ENCODE measurements at regions of chr9 and their contacts with region 1.

Region 1: GRCh38 chr9:35603987-35604577 is 980 bp upstream of the TESK1 start:
- DNase-seq: peak; percentile 95
- ATAC-seq: peak; percentile 90
- H3K4me3 Mint-ChIP-seq: peak overlapping the region; percentile 97
- H3K27ac Mint-ChIP-seq: peak overlapping the region; percentile 97
- H3K4me1 Mint-ChIP-seq: peaks cover 37% of the 10 kb centered on the region
- H3K27me3 Mint-ChIP-seq: no peaks in the 10 kb centered on the region
- CTCF ChIP-seq: peak; percentile 76

Region 2: DNA sequence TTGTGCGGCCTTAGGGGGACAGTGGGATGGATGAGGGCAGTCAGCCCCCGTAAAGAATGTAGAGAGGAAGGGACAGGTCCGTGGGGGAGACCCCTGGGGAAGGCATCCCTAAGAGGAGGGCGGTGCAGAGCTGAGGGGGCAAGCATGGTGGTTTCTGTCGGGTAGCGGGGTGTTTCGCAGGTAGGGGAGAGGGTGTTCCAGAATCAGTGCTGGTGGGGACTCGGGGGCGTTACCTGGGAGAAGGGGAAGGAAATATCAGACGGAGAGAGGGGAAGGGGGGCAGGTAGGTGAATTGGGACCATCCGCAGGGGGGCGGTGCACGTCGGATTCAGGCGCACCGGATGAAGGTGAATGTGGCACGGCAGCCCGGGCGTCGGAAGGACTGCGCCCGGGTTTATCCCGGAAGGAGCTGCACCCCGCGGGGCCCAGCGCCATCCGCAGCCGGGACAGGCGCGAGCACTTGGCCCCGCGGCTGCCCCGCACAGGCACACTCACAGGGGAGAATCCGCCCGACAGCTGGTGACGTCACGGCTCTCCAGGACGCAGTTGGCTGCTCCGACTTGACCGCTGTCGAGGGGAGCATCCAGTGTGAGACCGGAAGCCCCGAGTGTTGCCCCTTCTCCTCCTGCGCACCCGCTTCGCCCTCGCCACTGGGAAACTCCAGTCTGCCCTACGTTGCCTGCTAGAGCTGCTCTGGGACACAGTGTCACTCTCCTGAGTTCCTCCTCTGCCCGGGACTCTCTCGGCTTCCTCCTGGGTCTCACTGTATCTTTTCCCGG is 12.8 kb after region 1 on chr9:
- CTCF ChIA-PET with region 1: interaction called, 14 read pairs
- POLR2A ChIA-PET with region 1: interaction called, 36 read pairs
- intact Hi-C with region 1: loop called (anchors 1 kb)
- DNase-seq: peak; percentile 64
- ATAC-seq: peak; percentile 8
- H3K4me3 Mint-ChIP-seq: peak overlapping the region; percentile 87
- H3K27ac Mint-ChIP-seq: peak overlapping the region; percentile 97
- H3K4me1 Mint-ChIP-seq: peaks cover 98% of the 10 kb centered on the region
- H3K27me3 Mint-ChIP-seq: no peaks in the 10 kb centered on the region
- CTCF ChIP-seq: no peak

Region 3: DNA sequence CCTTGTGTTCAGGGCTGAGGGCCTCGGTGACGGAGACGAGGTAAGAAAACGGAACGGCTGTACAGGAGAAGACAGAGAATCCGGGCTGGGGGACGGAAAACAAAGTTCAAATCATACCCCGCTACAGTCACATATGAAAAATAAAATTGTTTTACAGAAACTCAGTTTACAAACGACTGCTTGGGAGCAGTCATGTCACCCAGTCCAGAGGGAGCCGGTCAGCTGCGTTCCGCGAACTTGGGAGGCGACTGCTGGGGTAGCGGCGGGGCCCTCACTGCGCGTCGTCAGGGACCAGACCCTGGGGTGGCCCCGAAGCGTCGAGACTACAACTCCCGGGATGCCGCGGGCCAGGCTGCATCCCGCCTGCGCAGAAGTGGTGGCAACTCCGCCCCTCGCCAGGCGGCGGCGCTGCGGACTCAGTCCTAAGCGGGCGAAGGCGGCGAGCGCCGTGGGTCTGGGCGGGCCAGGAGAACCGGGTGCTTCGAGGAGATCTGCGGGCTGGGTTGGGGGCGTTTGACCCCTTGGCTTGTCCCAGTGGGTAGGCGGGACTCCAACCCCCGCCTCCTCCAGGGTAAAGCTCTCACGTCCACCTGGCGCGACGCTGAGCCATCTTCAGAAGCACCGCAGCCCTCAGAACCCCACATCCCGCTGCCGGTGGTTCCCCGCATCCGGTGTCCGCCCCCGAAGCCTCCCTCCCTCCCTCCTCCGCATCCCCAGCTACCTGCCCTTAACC is 42.6 kb after region 1 on chr9:
- CTCF ChIA-PET with region 1: interaction called, 162 read pairs
- POLR2A ChIA-PET with region 1: interaction called, 549 read pairs
- intact Hi-C with region 1: loop called (anchors 1 kb)
- DNase-seq: peak; percentile 94
- ATAC-seq: peak; percentile 88
- H3K4me3 Mint-ChIP-seq: peak overlapping the region; percentile 97
- H3K27ac Mint-ChIP-seq: peak overlapping the region; percentile 98
- H3K4me1 Mint-ChIP-seq: peaks cover 90% of the 10 kb centered on the region
- H3K27me3 Mint-ChIP-seq: no peaks in the 10 kb centered on the region
- CTCF ChIP-seq: peak; percentile 65

Region 4: GRCh38 chr9:35696525-35697215 is 92.6 kb after region 1 on chr9:
- CTCF ChIA-PET with region 1: interaction called, 41 read pairs
- POLR2A ChIA-PET with region 1: interaction called, 9 read pairs
- intact Hi-C with region 1: loop called (anchors 1 kb)
- DNase-seq: peak; percentile 50
- ATAC-seq: peak; percentile 98
- H3K4me3 Mint-ChIP-seq: no peak overlapping the region
- H3K27ac Mint-ChIP-seq: peak overlapping the region; percentile 76
- H3K4me1 Mint-ChIP-seq: peaks cover 9% of the 10 kb centered on the region
- H3K27me3 Mint-ChIP-seq: no peaks in the 10 kb centered on the region
- CTCF ChIP-seq: no peak

Region 5: DNA sequence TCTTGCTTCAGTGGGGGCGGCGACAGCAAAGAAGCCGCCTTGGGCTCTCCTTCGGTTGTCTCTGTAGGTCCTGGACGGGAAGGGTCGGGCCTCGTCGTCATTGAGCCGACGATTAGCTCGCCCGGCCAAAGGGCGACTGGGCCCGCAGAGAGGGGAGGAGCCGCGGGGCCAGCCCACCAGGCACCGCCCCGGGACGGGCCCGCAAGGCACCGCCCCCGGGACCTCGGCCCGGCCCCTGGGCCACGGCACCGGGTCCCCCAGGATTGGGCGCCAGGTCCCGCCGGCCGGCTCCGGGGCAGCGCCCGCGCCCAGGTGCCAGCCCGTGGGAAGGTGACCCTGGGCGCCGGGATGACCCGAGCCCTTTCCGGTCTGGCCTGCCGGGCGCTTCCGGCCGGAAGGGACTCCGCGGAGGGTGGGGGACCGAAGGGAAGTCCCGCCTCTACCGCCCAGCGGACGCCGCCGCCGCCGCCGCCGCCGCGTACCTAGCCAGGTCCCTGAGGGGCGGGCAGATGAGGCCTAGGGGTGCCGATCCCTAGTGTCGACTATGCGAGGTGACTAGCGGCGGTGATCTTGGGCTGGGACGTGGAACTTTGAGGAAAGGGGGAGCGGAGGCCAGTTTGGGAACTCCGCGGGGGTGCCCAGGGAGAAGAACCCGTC is 144.9 kb after region 1 on chr9 and contains the starts of genes GBA2 and RGP1:
- CTCF ChIA-PET with region 1: interaction called, 5 read pairs
- POLR2A ChIA-PET with region 1: interaction called, 3 read pairs
- intact Hi-C with region 1: loop called (anchors 1 kb)
- DNase-seq: peak; percentile 84
- ATAC-seq: peak; percentile 84
- H3K4me3 Mint-ChIP-seq: peak within 1 kb of the TSS; percentile 93
- H3K27ac Mint-ChIP-seq: peak within 1 kb of the TSS; percentile 88
- H3K4me1 Mint-ChIP-seq: peaks cover 44% of the 10 kb centered on the region
- H3K27me3 Mint-ChIP-seq: no peaks in the 10 kb centered on the region
- CTCF ChIP-seq: no peak
- total RNA-seq, gene GBA2: 93.4 and 104 TPM in 2 replicates
- total RNA-seq, gene RGP1: 23.8 and 25.4 TPM in 2 replicates

Region 6: GRCh38 chr9:35829084-35829763 is 225.1 kb after region 1 on chr9 and contains the start of gene TMEM8B:
- CTCF ChIA-PET with region 1: interaction called, 7 read pairs
- POLR2A ChIA-PET with region 1: interaction called, 3 read pairs
- intact Hi-C with region 1: loop called (anchors 1 kb)
- DNase-seq: peak; percentile 89
- ATAC-seq: peak; percentile 92
- H3K4me3 Mint-ChIP-seq: peak within 1 kb of the TSS; percentile 95
- H3K27ac Mint-ChIP-seq: peak within 1 kb of the TSS; percentile 86
- H3K4me1 Mint-ChIP-seq: peaks cover 34% of the 10 kb centered on the region
- H3K27me3 Mint-ChIP-seq: no peaks in the 10 kb centered on the region
- CTCF ChIP-seq: no peak
- total RNA-seq, gene TMEM8B: 5.0 and 8.0 TPM in 2 replicates